Endothelial cell of umbilical vein (primary cell): ENCODE measurements at regions of chr5 and their contacts with region 1.

Region 1: GRCh38 chr5:32489791-32490582 is 45.4 kb upstream of the ZFR start:
- DNase-seq: peak; percentile 73
- H3K4me3 ChIP-seq: no peak overlapping the region
- H3K27ac ChIP-seq: no peak overlapping the region
- H3K4me1 ChIP-seq: no peaks in the 10 kb centered on the region
- H3K27me3 ChIP-seq: no peaks in the 10 kb centered on the region
- CTCF ChIP-seq: peak; percentile 65 to 67
- POLR2A ChIP-seq: no peak

Region 2: GRCh38 chr5:31086839-31087415 is 1403.1 kb before region 1 on chr5:
- CTCF ChIA-PET with region 1: no interaction called
- POLR2A ChIA-PET with region 1: no interaction called
- dilution Hi-C with region 1: no loop called
- intact Hi-C with region 1: no loop called
- DNase-seq: no peak
- H3K4me3 ChIP-seq: no peak overlapping the region
- H3K27ac ChIP-seq: no peak overlapping the region
- H3K4me1 ChIP-seq: no peaks in the 10 kb centered on the region
- H3K27me3 ChIP-seq: no peaks in the 10 kb centered on the region
- CTCF ChIP-seq: no peak
- POLR2A ChIP-seq: no peak

Region 3: GRCh38 chr5:32475334-32476097 is 14.5 kb before region 1 on chr5:
- CTCF ChIA-PET with region 1: interaction called, 15 read pairs
- POLR2A ChIA-PET with region 1: no interaction called
- dilution Hi-C with region 1: no loop called
- intact Hi-C with region 1: no loop called
- DNase-seq: no peak
- H3K4me3 ChIP-seq: no peak overlapping the region
- H3K27ac ChIP-seq: no peak overlapping the region
- H3K4me1 ChIP-seq: no peaks in the 10 kb centered on the region
- H3K27me3 ChIP-seq: no peaks in the 10 kb centered on the region
- CTCF ChIP-seq: no peak
- POLR2A ChIP-seq: no peak

Region 4: GRCh38 chr5:32504989-32505596 is 15.1 kb after region 1 on chr5:
- CTCF ChIA-PET with region 1: interaction called, 34 read pairs
- POLR2A ChIA-PET with region 1: no interaction called
- dilution Hi-C with region 1: no loop called
- intact Hi-C with region 1: no loop called
- DNase-seq: peak; percentile 95
- H3K4me3 ChIP-seq: no peak overlapping the region
- H3K27ac ChIP-seq: no peak overlapping the region
- H3K4me1 ChIP-seq: peaks cover 14% of the 10 kb centered on the region
- H3K27me3 ChIP-seq: peaks cover 6 to 10% of the 10 kb centered on the region in 2 experiments
- CTCF ChIP-seq: no peak
- POLR2A ChIP-seq: no peak

Region 5: GRCh38 chr5:32600057-32600622 is 110.2 kb after region 1 on chr5:
- CTCF ChIA-PET with region 1: interaction called, 10 read pairs
- POLR2A ChIA-PET with region 1: no interaction called
- dilution Hi-C with region 1: no loop called
- intact Hi-C with region 1: no loop called
- DNase-seq: peak; percentile 81
- H3K4me3 ChIP-seq: no peak overlapping the region
- H3K27ac ChIP-seq: peak overlapping the region; percentile 13
- H3K4me1 ChIP-seq: peaks cover 49% of the 10 kb centered on the region
- H3K27me3 ChIP-seq: no peaks in the 10 kb centered on the region
- CTCF ChIP-seq: no peak
- POLR2A ChIP-seq: no peak

Region 6: DNA sequence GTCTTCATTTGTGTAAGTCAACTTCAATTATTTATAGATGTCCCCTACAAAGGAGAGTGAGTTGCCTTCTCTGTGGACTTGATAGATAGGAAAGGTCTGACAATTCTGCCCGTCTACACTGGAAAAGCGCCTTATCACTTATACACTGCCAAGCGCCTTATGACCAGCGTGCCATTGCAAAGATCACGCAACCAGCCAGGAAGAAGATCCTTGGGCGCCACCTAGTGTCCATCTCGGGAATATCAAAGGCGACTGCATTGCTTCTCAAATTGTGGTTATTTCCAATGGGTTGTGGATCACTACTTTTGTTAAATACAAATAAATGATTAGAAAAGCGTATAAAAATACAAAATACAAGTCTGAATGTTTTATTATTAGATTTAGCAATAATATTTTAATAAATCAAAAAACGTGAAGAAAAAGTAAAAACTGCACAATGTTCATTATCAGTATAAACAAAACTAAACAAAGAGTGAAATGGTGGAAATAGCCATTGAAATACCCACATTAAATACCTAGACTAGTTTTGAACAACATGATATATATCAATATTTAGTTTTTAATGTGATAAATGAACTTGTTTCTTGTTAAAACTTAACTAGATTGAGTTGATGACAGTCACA is 123.2 kb after region 1 on chr5:
- CTCF ChIA-PET with region 1: interaction called, 140 read pairs
- POLR2A ChIA-PET with region 1: no interaction called
- dilution Hi-C with region 1: no loop called
- intact Hi-C with region 1: loop called (anchors 1 kb)
- DNase-seq: peak; percentile 85
- H3K4me3 ChIP-seq: no peak overlapping the region
- H3K27ac ChIP-seq: no peak overlapping the region
- H3K4me1 ChIP-seq: peaks cover 7% of the 10 kb centered on the region
- H3K27me3 ChIP-seq: no peaks in the 10 kb centered on the region
- CTCF ChIP-seq: peak; percentile 78 to 86
- POLR2A ChIP-seq: no peak

Region 7: DNA sequence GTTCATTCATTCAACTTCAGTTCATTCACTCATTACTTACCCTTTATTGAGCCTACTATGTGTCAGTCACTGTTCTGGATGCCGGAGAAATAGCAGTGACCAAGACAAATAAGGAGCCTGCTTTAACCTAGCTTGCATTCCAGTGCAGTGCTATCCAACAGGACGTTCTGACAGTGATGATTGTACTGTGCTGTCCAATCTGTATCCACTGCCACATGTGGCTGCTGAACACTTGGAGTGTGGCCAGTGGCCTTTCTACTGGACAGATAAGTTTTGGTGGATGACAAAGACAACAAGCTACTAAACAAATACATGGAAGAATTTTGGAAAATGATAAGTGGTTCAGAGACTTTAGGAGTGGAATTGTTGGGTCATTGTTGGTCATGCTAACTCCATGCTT is 129.0 kb after region 1 on chr5:
- CTCF ChIA-PET with region 1: interaction called, 140 read pairs
- POLR2A ChIA-PET with region 1: no interaction called
- dilution Hi-C with region 1: no loop called
- intact Hi-C with region 1: no loop called
- DNase-seq: no peak
- H3K4me3 ChIP-seq: no peak overlapping the region
- H3K27ac ChIP-seq: no peak overlapping the region
- H3K4me1 ChIP-seq: no peaks in the 10 kb centered on the region
- H3K27me3 ChIP-seq: peaks cover 1 to 4% of the 10 kb centered on the region in 2 experiments
- CTCF ChIP-seq: no peak
- POLR2A ChIP-seq: no peak

Region 8: GRCh38 chr5:32734827-32735378 is 244.9 kb after region 1 on chr5:
- CTCF ChIA-PET with region 1: no interaction called
- POLR2A ChIA-PET with region 1: no interaction called
- dilution Hi-C with region 1: no loop called
- intact Hi-C with region 1: no loop called
- DNase-seq: no peak
- H3K4me3 ChIP-seq: no peak overlapping the region
- H3K27ac ChIP-seq: no peak overlapping the region
- H3K4me1 ChIP-seq: no peaks in the 10 kb centered on the region
- H3K27me3 ChIP-seq: no peaks in the 10 kb centered on the region
- CTCF ChIP-seq: no peak
- POLR2A ChIP-seq: no peak

Region 9: GRCh38 chr5:33423018-33423630 is 933.1 kb after region 1 on chr5:
- CTCF ChIA-PET with region 1: interaction called, 5 read pairs
- POLR2A ChIA-PET with region 1: no interaction called
- dilution Hi-C with region 1: no loop called
- intact Hi-C with region 1: loop called (anchors 5 kb)
- DNase-seq: peak; percentile 66
- H3K4me3 ChIP-seq: no peak overlapping the region
- H3K27ac ChIP-seq: no peak overlapping the region
- H3K4me1 ChIP-seq: no peaks in the 10 kb centered on the region
- H3K27me3 ChIP-seq: peaks cover 0 to 2% of the 10 kb centered on the region in 2 experiments
- CTCF ChIP-seq: peak; percentile 11 to 17
- POLR2A ChIP-seq: no peak